ENCODE measurements at regions of chr12 and their contacts with region 1.

Region 1: GRCh38 chr12:25384038-25384892 is 133.5 kb upstream of the KRAS start:
- DNase-seq: no peak
- ATAC-seq: no peak
- H3K4me3 ChIP-seq: no peak overlapping the region
- H3K27ac ChIP-seq: peak overlapping the region; percentile 99
- H3K4me1 ChIP-seq: no peaks in the 10 kb centered on the region
- H3K27me3 ChIP-seq: no peaks in the 10 kb centered on the region

Region 2: DNA sequence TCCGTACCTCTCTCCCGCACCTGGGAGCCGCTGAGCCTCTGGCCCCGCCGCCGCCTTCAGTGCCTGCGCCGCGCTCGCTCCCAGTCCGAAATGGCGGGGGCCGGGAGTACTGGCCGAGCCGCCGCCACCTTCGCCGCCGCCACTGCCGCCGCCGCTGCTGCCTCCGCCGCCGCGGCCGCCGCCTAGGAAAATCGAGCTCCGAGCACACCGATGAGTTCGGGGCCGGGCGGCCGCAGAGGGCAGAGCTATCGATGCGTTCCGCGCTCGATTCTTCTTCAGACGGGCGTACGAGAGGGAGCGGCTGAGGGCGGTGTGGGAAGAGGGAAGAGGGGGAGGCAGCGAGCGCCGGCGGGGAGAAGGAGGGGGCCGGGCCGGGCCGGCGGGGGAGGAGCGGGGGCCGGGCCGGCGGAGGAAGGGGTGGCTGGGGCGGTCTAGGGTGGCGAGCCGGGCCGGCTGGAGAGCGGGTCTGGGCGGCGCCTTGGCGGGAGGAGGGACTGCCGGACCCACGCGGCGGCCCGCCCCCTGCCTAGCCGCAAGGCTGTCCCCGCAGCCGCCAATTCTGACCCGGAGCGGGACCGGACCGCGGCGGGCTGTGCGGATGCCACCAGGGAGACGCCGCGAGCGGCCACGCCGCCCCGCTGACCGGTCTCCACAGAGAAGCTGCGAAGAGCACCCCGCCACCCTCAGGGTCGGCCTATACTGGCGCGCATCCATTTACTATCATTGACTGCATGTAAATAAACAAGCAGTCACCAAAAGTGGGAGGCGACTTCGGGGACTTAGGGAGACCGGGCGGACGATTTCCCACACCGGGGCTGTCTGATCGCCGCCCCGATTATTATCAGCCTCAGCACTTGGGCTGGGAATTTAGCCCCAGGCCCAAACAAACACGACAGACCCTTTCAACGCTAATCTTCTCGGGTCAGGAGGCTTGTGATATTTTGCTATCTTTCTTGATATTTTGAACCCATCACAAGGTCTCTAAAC is 133.2 kb before region 1 on chr12 and contains the start of gene KRAS:
- intact Hi-C with region 1: loop called in 1 of 4 experiments (anchors 5 kb)
- DNase-seq: peak; percentile 98 to 99 (median 99)
- ATAC-seq: peak; percentile 99
- H3K4me3 ChIP-seq: peak within 1 kb of the TSS; percentile 99
- H3K27ac ChIP-seq: peak within 1 kb of the TSS; percentile 86
- H3K4me1 ChIP-seq: no peaks in the 10 kb centered on the region
- H3K27me3 ChIP-seq: no peaks in the 10 kb centered on the region
- total RNA-seq, gene KRAS: 12.2 to 18.4 (median 15.3) TPM

Region 3: GRCh38 chr12:25644979-25645378 is 260.7 kb after region 1 on chr12:
- intact Hi-C with region 1: no loop called
- DNase-seq: no peak
- ATAC-seq: no peak
- H3K4me3 ChIP-seq: no peak overlapping the region
- H3K27ac ChIP-seq: no peak overlapping the region
- H3K4me1 ChIP-seq: no peaks in the 10 kb centered on the region
- H3K27me3 ChIP-seq: no peaks in the 10 kb centered on the region

Region 4: DNA sequence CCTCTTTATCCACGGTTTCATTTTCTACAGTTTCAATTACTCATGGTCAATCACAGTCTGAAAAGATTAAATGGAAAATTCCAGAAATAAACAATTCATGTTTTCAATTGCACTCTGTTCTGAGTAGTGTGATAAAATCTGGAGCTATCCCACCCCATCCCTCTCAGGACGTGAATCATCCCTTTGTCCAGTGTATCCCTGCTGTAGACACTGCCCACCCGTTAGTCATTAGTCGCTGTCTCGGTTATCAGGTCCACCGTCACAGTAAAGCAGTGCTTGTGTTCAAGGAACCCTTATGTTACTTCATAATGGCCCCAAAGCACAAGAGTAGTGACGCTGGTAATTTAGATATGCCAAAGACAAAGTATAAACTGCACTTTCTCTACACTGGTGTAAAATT is 309.8 kb after region 1 on chr12:
- intact Hi-C with region 1: no loop called
- DNase-seq: peak in 2 of 3 donors; percentile 52 to 62
- ATAC-seq: peak; percentile 71 to 93
- H3K4me3 ChIP-seq: no peak overlapping the region
- H3K27ac ChIP-seq: no peak overlapping the region
- H3K4me1 ChIP-seq: no peaks in the 10 kb centered on the region
- H3K27me3 ChIP-seq: no peaks in the 10 kb centered on the region

Measured in right cardiac atrium (tissue), 5 donors.